ENCODE measurements at regions of chrX and their contacts with region 1.

Region 1: GRCh38 chrX:68196939-68197791 is 236.1 kb downstream of the OPHN1 start:
- DNase-seq: peak; percentile 0
- H3K4me3 Mint-ChIP-seq: no peak overlapping the region
- H3K27ac Mint-ChIP-seq: no peak overlapping the region
- H3K4me1 Mint-ChIP-seq: no peaks in the 10 kb centered on the region
- H3K27me3 Mint-ChIP-seq: no peaks in the 10 kb centered on the region

Region 2: DNA sequence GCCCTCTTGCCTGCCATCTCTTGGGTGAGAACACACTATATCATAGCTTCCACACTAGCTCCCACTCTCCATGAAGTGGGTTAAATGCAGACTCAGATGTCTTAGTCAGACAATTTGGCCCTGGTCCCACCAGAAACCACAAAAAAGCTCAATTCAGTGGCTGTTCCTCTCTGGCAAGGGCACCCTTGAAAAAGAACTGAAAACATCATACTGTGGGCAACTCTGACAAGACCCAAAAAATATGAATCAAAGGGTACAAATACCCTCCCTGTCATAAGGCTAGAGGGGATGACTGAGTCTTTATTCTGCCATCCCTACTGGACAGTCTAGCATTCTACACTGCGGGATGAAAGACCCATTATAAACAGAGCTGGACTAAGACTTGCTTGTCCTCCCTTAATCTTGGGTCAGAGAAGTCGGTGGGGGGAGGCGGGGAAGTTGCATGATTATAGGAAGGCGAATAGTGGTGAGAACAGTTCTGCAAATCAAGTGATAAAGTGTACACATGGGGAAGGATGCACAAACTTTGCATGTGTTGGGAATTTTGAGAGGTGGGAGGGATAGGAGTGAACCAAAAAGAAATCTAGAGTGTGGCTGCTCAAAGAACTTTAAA is 64.0 kb after region 1 on chrX:
- intact Hi-C with region 1: no loop called
- DNase-seq: no peak
- H3K4me3 Mint-ChIP-seq: no peak overlapping the region
- H3K27ac Mint-ChIP-seq: no peak overlapping the region
- H3K4me1 Mint-ChIP-seq: no peaks in the 10 kb centered on the region
- H3K27me3 Mint-ChIP-seq: no peaks in the 10 kb centered on the region

Region 3: DNA sequence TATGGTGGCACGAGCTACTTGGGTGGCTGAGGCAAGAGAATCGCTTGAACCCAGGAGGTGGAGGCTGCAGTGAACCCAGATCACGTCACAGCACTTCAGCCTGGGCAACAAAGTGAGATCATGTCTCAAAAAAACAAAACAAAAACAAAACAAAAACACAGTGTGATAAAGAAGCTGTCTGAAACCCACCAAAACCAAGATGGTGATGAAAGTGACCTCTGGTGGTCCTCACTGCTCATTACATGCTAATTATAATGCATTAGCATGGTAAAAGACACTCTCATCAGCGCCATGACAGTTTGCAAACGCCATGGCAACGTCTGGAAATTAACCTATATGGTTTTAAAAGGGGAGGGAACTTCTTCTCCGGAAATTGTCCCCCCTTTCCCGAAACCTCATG is 265.5 kb after region 1 on chrX:
- intact Hi-C with region 1: loop called (anchors 5 kb)
- DNase-seq: no peak
- H3K4me3 Mint-ChIP-seq: no peak overlapping the region
- H3K27ac Mint-ChIP-seq: no peak overlapping the region
- H3K4me1 Mint-ChIP-seq: no peaks in the 10 kb centered on the region
- H3K27me3 Mint-ChIP-seq: no peaks in the 10 kb centered on the region

Region 4: DNA sequence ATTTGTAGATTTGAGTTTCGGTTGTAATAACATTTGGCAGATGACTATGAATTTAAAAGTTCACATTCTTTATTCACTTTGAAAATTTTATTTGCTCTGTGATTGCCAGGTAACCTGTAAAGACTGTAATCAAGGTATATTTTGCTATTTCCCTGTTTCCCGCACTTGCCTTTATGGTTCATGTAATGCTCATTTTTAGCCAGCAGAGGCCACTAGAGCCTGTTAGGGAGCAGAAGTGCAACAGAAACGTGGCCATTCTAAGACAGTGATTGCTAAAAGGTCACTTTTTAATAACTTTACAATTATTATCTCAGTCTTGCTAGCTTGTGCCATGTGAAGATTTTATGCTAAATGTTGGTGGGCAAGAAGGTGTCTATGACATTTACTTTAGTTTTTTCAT is 314.1 kb after region 1 on chrX:
- intact Hi-C with region 1: loop called (anchors 2 kb)
- DNase-seq: no peak
- H3K4me3 Mint-ChIP-seq: no peak overlapping the region
- H3K27ac Mint-ChIP-seq: no peak overlapping the region
- H3K4me1 Mint-ChIP-seq: peaks cover 12% of the 10 kb centered on the region
- H3K27me3 Mint-ChIP-seq: no peaks in the 10 kb centered on the region

Region 5: DNA sequence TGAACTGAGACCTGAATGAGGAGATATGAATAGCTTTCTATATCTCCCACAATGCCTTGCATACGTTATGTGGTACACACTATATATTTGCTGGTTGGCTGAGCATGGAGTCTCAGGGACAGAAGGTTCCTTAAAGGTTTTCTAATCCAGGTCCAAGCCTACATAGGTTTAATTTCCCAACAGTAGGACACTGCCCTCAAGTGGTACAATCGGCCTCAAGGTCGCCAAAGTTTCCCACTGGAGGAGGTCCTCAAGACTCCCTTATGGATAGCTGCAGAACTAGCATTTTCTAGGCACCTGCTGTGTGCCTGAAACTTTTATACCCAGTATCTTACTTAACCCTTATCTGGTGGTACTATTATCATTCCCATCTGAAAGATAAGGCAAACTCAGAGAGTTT is 610.7 kb after region 1 on chrX:
- intact Hi-C with region 1: loop called (anchors 5 kb)
- DNase-seq: no peak
- H3K4me3 Mint-ChIP-seq: no peak overlapping the region
- H3K27ac Mint-ChIP-seq: no peak overlapping the region
- H3K4me1 Mint-ChIP-seq: no peaks in the 10 kb centered on the region
- H3K27me3 Mint-ChIP-seq: peaks cover 6% of the 10 kb centered on the region

Region 6: GRCh38 chrX:69387567-69388487 is 1190.7 kb after region 1 on chrX:
- intact Hi-C with region 1: loop called (anchors 10 kb)
- DNase-seq: peak; percentile 0
- H3K4me3 Mint-ChIP-seq: no peak overlapping the region
- H3K27ac Mint-ChIP-seq: no peak overlapping the region
- H3K4me1 Mint-ChIP-seq: no peaks in the 10 kb centered on the region
- H3K27me3 Mint-ChIP-seq: peaks cover 3% of the 10 kb centered on the region

Measured in activated T-helper 1 cell treated with anti-CD3 and anti-CD28 coated beads, Interleukin-12 subunit alpha, Interleukin-12 subunit beta, Interleukin-2, Interleukin-4 antibody, amounts not matched to agents 30 ng/mL and 10 ng/mL and 1 ng/mL, durations not matched to agents 14 hours and 24 hours and 36 hours (primary cell).